ENCODE measurements at regions of chr11 and their contacts with region 1.

Region 1: GRCh38 chr11:122367809-122368231 is 251.8 kb upstream of the BLID start:
- DNase-seq: peak; percentile 82
- ATAC-seq: peak; percentile 92
- H3K4me3 ChIP-seq: no peak overlapping the region
- H3K27ac ChIP-seq: peak overlapping the region; percentile 34
- H3K4me1 ChIP-seq: no peaks in the 10 kb centered on the region
- H3K27me3 ChIP-seq: no peaks in the 10 kb centered on the region; the same call in 1 of the 2 replicates
- CTCF ChIP-seq: no peak
- POLR2A ChIP-seq: no peak
- RAD21 ChIP-seq: no peak

Region 2: DNA sequence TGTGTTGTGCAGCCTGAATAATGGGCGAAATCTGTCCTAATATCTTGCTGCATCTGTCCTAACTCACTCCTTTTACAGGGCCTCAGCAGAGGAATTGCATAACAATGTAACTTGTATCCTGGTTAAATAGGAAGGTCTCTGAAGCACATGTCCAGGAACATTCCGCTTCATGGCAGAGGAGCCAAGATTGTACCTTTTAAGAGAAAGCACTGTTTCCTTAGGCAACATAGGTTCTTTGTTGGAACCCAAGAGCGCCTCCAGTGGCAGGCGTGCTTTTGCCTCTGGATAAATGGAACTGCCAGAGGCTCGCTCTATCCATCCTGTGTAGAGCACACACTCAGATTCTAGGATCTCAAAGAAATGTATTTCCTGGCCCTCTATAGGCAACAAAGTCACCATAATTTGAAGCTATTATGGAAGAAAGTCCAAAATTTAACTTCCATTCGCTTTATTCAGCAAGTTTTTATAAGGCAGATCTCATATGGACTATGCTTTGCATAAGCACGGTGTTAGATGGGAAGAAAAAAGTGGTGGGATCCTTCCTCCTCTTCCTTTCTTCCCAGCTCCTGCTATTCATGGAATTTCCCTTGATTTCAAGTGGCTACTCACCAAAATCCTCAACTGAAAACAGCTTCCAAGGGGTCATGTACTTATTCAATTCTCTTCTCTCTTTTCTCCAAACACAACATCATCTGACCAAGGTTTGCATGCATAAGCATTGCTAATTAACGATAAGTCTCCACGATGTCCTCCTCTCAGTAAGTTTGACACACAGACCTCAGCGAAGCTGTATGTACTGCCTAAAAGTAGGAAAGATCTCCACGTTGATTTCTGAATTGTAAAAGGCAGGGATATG is 252.1 kb before region 1 on chr11 and contains the start of gene BLID:
- CTCF ChIA-PET with region 1: no interaction called
- POLR2A ChIA-PET with region 1: no interaction called
- dilution Hi-C with region 1: no loop called
- in situ Hi-C with region 1: no loop called
- intact Hi-C with region 1: loop called (anchors 5 kb)
- DNase-seq: peak; percentile 46
- ATAC-seq: peak; percentile 19; the same call in 1 of the 2 replicates
- H3K4me3 ChIP-seq: no peak within 1 kb of the TSS
- H3K27ac ChIP-seq: peak within 1 kb of the TSS; percentile 16; the same call in 1 of the 2 replicates
- H3K4me1 ChIP-seq: peaks cover 7% of the 10 kb centered on the region; the same call in 1 of the 2 replicates
- H3K27me3 ChIP-seq: no peaks in the 10 kb centered on the region
- CTCF ChIP-seq: peak; percentile 46
- POLR2A ChIP-seq: no peak
- RAD21 ChIP-seq: no peak
- total RNA-seq, gene BLID: 25.8 and 30.8 TPM in 2 replicates

Region 3: DNA sequence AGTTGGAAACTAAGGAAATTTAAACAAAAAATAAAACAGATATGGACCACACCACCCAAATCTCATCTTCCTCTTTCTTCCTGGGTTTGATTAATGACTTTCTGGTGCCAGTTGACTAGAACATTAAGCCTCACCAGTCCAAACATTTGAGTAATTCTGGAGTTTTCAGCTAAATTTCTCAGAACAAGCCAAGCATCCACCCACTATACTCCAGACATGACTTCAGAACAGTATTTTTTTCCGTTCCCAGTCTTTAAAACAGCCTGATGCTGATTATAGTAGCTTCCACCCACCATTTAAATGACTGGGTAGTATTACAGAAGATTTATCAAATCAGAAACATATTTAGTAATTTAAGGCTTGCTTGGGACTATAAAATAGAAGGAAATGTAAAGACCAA is 56.8 kb after region 1 on chr11:
- CTCF ChIA-PET with region 1: no interaction called
- POLR2A ChIA-PET with region 1: no interaction called
- dilution Hi-C with region 1: no loop called
- in situ Hi-C with region 1: no loop called
- intact Hi-C with region 1: no loop called
- DNase-seq: no peak
- ATAC-seq: no peak
- H3K4me3 ChIP-seq: no peak overlapping the region
- H3K27ac ChIP-seq: no peak overlapping the region
- H3K4me1 ChIP-seq: no peaks in the 10 kb centered on the region
- H3K27me3 ChIP-seq: peaks cover 6% of the 10 kb centered on the region; the same call in 1 of the 2 replicates
- CTCF ChIP-seq: no peak
- POLR2A ChIP-seq: no peak
- RAD21 ChIP-seq: no peak

Region 4: DNA sequence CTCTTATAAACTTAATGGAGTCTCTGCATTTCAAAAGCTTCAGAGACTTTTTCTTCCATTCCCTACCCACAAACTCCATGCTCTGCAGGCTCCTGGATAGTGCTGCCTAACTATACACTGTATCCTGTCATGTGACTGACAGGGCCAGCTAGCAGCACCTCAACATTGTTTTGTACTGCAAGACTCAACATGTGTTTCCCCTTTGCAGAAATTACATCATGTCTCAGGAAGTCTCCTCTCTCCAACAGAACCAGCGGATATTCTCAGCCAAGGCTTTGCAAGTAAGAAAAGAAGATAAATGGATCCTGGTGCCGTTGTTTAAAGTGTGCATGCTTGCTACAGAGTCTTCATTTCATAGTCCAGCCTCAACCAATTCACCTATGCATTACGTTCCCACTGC is 123.7 kb after region 1 on chr11:
- CTCF ChIA-PET with region 1: no interaction called
- POLR2A ChIA-PET with region 1: no interaction called
- dilution Hi-C with region 1: no loop called
- in situ Hi-C with region 1: no loop called
- intact Hi-C with region 1: loop called (anchors 5 kb)
- DNase-seq: peak; percentile 75
- ATAC-seq: peak; percentile 60; the same call in 1 of the 2 replicates
- H3K4me3 ChIP-seq: no peak overlapping the region
- H3K27ac ChIP-seq: peak overlapping the region; percentile 32; the same call in 1 of the 2 replicates
- H3K4me1 ChIP-seq: peaks cover 4% of the 10 kb centered on the region; the same call in 1 of the 2 replicates
- H3K27me3 ChIP-seq: peaks cover 4% of the 10 kb centered on the region; the same call in 1 of the 2 replicates
- CTCF ChIP-seq: no peak
- POLR2A ChIP-seq: no peak
- RAD21 ChIP-seq: no peak

Region 5: GRCh38 chr11:122617297-122617696 is 249.5 kb after region 1 on chr11:
- CTCF ChIA-PET with region 1: no interaction called
- POLR2A ChIA-PET with region 1: no interaction called
- dilution Hi-C with region 1: no loop called
- in situ Hi-C with region 1: no loop called
- intact Hi-C with region 1: no loop called
- DNase-seq: peak; percentile 4
- ATAC-seq: no peak
- H3K4me3 ChIP-seq: no peak overlapping the region
- H3K27ac ChIP-seq: no peak overlapping the region
- H3K4me1 ChIP-seq: no peaks in the 10 kb centered on the region
- H3K27me3 ChIP-seq: peaks cover 25% of the 10 kb centered on the region
- CTCF ChIP-seq: no peak
- POLR2A ChIP-seq: no peak
- RAD21 ChIP-seq: no peak